ENCODE measurements at regions of chr3 and their contacts with region 1.

Region 1: DNA sequence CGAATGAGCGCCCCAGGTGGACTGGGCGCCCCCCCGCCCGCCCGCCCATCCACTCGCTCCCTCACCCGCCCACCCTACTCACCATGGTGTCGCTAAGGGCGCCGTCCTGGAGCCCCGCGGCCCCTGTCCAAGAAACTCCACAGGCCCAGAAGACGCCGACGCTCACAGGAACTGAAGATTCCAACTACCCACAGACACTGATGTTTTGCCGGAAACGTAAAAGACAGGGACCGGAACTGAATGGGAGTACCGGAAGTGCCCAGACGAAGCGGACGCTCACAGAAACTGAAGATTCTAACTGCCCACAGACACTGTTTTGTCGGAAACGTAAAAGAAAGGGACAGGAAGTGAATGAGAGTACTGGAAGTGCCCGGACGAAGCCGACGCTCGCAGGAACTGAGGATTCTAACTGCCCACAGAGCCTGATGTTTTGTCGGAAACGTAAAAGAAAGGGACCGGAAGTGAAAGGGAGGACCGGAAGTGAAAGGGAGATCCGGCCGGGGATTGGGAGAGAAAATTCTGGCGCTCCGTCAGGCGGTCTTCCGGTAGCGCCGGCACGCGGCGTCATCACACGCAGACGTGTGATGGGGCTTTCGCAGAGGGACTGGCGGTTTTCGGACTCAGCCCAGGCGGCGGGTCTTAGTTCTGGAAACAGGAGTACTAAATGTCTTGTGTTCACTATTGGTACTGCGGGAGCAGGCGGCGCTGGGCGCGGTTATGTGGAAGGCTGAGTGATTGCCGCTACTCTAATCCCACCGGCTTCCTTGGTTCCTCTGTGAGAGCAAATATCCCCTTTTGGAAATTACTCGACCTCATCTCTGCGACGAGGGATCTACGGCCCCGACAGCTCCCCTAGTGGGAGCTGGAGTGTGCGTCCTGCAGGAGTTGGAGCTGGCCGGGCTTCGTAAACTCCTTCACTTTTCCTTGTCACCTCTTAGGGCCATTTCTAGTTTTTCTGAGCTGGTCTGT is at the start of gene ISY1:
- DNase-seq: peak; percentile 91
- ATAC-seq: peak; percentile 82
- H3K4me3 Mint-ChIP-seq: peak within 1 kb of the TSS; percentile 88
- H3K27ac Mint-ChIP-seq: peak within 1 kb of the TSS; percentile 98
- H3K4me1 Mint-ChIP-seq: peaks cover 27% of the 10 kb centered on the region
- H3K27me3 Mint-ChIP-seq: no peaks in the 10 kb centered on the region
- CTCF ChIP-seq: peak; percentile 84
- total RNA-seq, gene ISY1: 66.7 to 68.5 TPM

Region 2: GRCh38 chr3:129176051-129176450 is 14.9 kb after region 1 on chr3:
- CTCF ChIA-PET with region 1: interaction called, 28 read pairs
- POLR2A ChIA-PET with region 1: interaction called, 45 read pairs
- intact Hi-C with region 1: no loop called
- DNase-seq: no peak
- ATAC-seq: no peak
- H3K4me3 Mint-ChIP-seq: peak overlapping the region; percentile 25
- H3K27ac Mint-ChIP-seq: peak overlapping the region; percentile 52
- H3K4me1 Mint-ChIP-seq: peaks cover 70% of the 10 kb centered on the region
- H3K27me3 Mint-ChIP-seq: no peaks in the 10 kb centered on the region
- CTCF ChIP-seq: no peak